Ovary (tissue), 10 donors: ENCODE measurements at regions of chr4 and their contacts with region 1.

Region 1: GRCh38 chr4:57110640-57111511 is 691 bp upstream of the IGFBP7 start:
- DNase-seq: peak; percentile 41 to 62 (median 59)
- H3K4me3 ChIP-seq: peak overlapping the region; percentile 68
- H3K27ac ChIP-seq: peak overlapping the region; percentile 90 to 94
- H3K4me1 ChIP-seq: peaks cover 1% of the 10 kb centered on the region
- H3K27me3 ChIP-seq: no peaks in the 10 kb centered on the region
- CTCF ChIP-seq: no peak
- EP300 ChIP-seq: no peak
- POLR2A ChIP-seq: peak; percentile 6

Region 2: DNA sequence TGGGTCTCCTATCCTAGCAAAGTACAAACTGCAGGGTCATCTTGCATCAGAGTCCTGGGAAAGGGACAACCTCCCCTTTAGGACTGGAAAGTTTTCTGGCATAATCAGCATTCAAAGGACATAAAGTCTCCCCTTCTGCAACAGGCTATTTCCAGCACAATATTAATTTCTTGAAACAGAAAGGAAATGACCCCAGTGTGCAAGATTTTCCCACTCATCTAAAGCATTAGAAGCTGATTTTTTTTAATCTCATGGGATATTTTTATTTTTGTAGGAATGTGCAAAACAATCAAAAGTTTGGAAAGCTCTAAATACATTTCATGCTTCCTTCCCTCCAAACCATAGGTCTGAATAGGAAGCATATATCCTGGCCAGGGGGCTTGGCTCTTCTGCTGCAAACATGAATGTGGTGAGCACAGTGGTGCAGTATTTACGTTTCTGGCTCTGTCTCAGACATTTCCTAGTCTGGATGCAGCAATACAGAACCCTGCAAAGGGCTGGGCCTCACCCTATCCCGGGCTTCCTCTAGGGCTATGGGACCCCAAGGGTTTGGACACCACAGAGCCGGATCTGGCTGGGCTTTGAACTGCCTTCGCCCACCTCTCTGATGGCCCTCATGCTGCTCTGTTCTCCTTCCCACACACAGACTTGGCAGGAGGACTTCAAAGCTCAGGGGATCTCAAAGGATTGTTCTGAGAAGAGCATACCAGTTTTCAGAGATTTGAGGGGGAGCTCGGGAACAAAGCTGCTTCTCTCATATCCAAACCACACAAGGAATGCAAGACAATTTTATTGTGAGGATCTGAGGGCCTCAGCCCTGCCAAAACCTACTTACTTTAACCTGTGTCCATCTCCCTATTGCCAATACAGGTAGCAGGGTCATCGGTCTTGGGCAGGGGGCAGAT is 67.3 kb before region 1 on chr4:
- intact Hi-C with region 1: loop called (anchors 5 to 10 kb)
- DNase-seq: no peak
- H3K4me3 ChIP-seq: no peak overlapping the region
- H3K27ac ChIP-seq: peak overlapping the region in 1 of 2 donors; percentile 40
- H3K4me1 ChIP-seq: peaks cover 27% of the 10 kb centered on the region
- H3K27me3 ChIP-seq: no peaks in the 10 kb centered on the region
- CTCF ChIP-seq: no peak
- EP300 ChIP-seq: no peak
- POLR2A ChIP-seq: no peak

Region 3: GRCh38 chr4:57064811-57065711 is 45.8 kb before region 1 on chr4:
- intact Hi-C with region 1: loop called in 1 of 4 experiments (anchors 5 kb)
- DNase-seq: peak; percentile 75 to 88 (median 76)
- H3K4me3 ChIP-seq: peak overlapping the region; percentile 17
- H3K27ac ChIP-seq: peak overlapping the region; percentile 42 to 74
- H3K4me1 ChIP-seq: peaks cover 29% of the 10 kb centered on the region
- H3K27me3 ChIP-seq: no peaks in the 10 kb centered on the region
- CTCF ChIP-seq: no peak
- EP300 ChIP-seq: no peak
- POLR2A ChIP-seq: no peak